Mucosa of descending colon (tissue), 3 donors: ENCODE measurements at regions of chr3 and their contacts with region 1.

Region 1: GRCh38 chr3:160707187-160707794 is 30.3 kb downstream of the ARL14 start:
- DNase-seq: peak in 1 of 3 donors; percentile 47
- ATAC-seq: peak; percentile 70
- H3K4me3 ChIP-seq: no peak overlapping the region
- H3K4me1 ChIP-seq: no peaks in the 10 kb centered on the region
- CTCF ChIP-seq: peak; percentile 23

Region 2: DNA sequence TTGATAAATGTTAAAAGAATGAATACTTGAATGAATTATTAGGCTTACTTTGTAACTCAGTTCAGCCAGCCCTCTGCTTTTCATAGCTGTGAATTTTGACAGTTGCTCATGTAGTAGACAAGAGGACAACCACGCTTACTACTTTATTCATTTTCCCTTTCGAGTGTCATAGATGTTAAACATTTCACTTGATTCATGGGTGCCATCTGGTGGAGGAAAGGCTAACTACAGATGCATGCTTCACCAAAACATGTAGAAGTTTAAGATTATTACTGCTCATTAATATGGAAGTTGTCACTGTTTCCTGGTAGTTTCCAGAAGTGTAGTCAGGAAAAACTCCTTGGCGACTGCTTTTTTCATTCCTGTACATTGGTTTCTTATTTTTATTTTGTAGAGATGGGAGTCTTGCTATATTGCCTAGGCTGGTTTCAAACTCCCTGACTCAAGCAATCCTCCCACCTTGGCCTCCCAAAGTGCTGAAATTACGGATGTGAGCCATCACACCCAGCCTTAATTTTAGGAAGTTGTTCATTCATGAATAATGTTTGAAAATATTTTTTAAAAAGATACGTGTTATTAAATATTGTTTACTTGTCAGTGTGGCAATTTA is 234.7 kb after region 1 on chr3:
- intact Hi-C with region 1: loop called (anchors 2 to 5 kb)
- DNase-seq: peak in 1 of 3 donors; percentile 95
- ATAC-seq: peak; percentile 82
- H3K4me3 ChIP-seq: no peak overlapping the region
- H3K4me1 ChIP-seq: no peaks in the 10 kb centered on the region
- CTCF ChIP-seq: peak; percentile 67

Region 3: GRCh38 chr3:160948272-160948671 is 241.0 kb after region 1 on chr3:
- intact Hi-C with region 1: loop called (anchors 2 to 5 kb)
- DNase-seq: no peak
- ATAC-seq: no peak
- H3K4me3 ChIP-seq: no peak overlapping the region
- H3K4me1 ChIP-seq: no peaks in the 10 kb centered on the region
- CTCF ChIP-seq: no peak